CD8-positive, alpha-beta T cell (primary cell): ENCODE measurements at regions of chr10 and their contacts with region 1.

Region 1: GRCh38 chr10:80699602-80700039 is 161.9 kb downstream of the SH2D4B start:
- DNase-seq: peak; percentile 31 to 80 (median 59)
- ATAC-seq: no peak
- H3K4me3 ChIP-seq: no peak overlapping the region
- H3K4me3 Mint-ChIP-seq: no peak overlapping the region
- H3K27ac ChIP-seq: no peak overlapping the region
- H3K27ac Mint-ChIP-seq: no peak overlapping the region
- H3K4me1 ChIP-seq: peaks cover 4% of the 10 kb centered on the region
- H3K4me1 Mint-ChIP-seq: no peaks in the 10 kb centered on the region
- H3K27me3 ChIP-seq: no peaks in the 10 kb centered on the region
- H3K27me3 Mint-ChIP-seq: no peaks in the 10 kb centered on the region
- CTCF ChIP-seq: peak; percentile 77

Region 2: GRCh38 chr10:80684259-80684658 is 15.4 kb before region 1 on chr10:
- CTCF ChIA-PET with region 1: interaction called, 19 read pairs
- POLR2A ChIA-PET with region 1: no interaction called
- intact Hi-C with region 1: no loop called
- DNase-seq: peak in 3 of 9 experiments; percentile 11 to 67 (median 62)
- ATAC-seq: peak; percentile 63
- H3K4me3 ChIP-seq: no peak overlapping the region
- H3K4me3 Mint-ChIP-seq: no peak overlapping the region
- H3K27ac ChIP-seq: no peak overlapping the region
- H3K27ac Mint-ChIP-seq: no peak overlapping the region
- H3K4me1 ChIP-seq: no peaks in the 10 kb centered on the region
- H3K4me1 Mint-ChIP-seq: peaks cover 2% of the 10 kb centered on the region
- H3K27me3 ChIP-seq: no peaks in the 10 kb centered on the region
- H3K27me3 Mint-ChIP-seq: no peaks in the 10 kb centered on the region
- CTCF ChIP-seq: no peak

Region 3: GRCh38 chr10:80713398-80713928 is 13.8 kb after region 1 on chr10:
- CTCF ChIA-PET with region 1: interaction called, 12 read pairs
- POLR2A ChIA-PET with region 1: no interaction called
- intact Hi-C with region 1: no loop called
- DNase-seq: peak in 1 of 9 experiments; percentile 1
- ATAC-seq: no peak
- H3K4me3 ChIP-seq: no peak overlapping the region
- H3K4me3 Mint-ChIP-seq: no peak overlapping the region
- H3K27ac ChIP-seq: no peak overlapping the region
- H3K27ac Mint-ChIP-seq: no peak overlapping the region
- H3K4me1 ChIP-seq: no peaks in the 10 kb centered on the region
- H3K4me1 Mint-ChIP-seq: no peaks in the 10 kb centered on the region
- H3K27me3 ChIP-seq: no peaks in the 10 kb centered on the region
- H3K27me3 Mint-ChIP-seq: peaks cover 2% of the 10 kb centered on the region
- CTCF ChIP-seq: no peak